ENCODE measurements at regions of chr17 and their contacts with region 1.

Region 1: GRCh38 chr17:56592487-56593085 is 913 bp upstream of the NOG start:
- DNase-seq: peak; percentile 52 to 88 (median 82)
- ATAC-seq: peak; percentile 96
- H3K4me3 ChIP-seq: no peak overlapping the region
- H3K27ac ChIP-seq: no peak overlapping the region
- H3K4me1 ChIP-seq: peaks cover 0 to 22% of the 10 kb centered on the region in 2 experiments; a peak in 2 of 5 replicates
- H3K27me3 ChIP-seq: peaks cover 17 to 28% of the 10 kb centered on the region in 2 experiments
- CTCF ChIP-seq: peak; percentile 67 to 88 (median 76)
- EP300 ChIP-seq: no peak
- POLR2A ChIP-seq: no peak
- RAD21 ChIP-seq: peak; percentile 84 to 91

Region 2: DNA sequence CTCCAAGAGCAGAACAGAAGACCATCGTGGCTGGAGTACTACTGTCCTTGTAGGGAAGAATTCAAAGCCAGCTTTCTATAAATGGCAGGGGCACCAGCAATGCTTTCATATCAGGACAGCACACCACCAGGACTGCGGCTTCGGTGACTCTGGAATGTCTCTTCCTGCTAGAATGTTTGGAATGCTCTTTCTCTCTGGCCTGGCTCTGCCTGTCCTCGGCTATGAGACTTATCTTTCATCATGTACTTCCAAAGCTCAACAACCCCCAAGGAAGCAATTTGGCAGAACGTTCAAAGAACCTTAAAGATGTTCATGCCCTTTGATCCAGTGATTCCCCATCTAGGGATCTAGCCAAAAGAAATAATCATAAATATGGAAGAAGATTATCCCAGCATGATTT is 51.8 kb before region 1 on chr17:
- CTCF ChIA-PET with region 1: no interaction called
- POLR2A ChIA-PET with region 1: no interaction called
- in situ Hi-C with region 1: no loop called
- intact Hi-C with region 1: no loop called
- DNase-seq: no peak
- ATAC-seq: no peak
- H3K4me3 ChIP-seq: no peak overlapping the region
- H3K27ac ChIP-seq: no peak overlapping the region
- H3K4me1 ChIP-seq: no peaks in the 10 kb centered on the region
- H3K27me3 ChIP-seq: no peaks in the 10 kb centered on the region
- CTCF ChIP-seq: no peak
- EP300 ChIP-seq: no peak
- POLR2A ChIP-seq: no peak
- RAD21 ChIP-seq: no peak

Region 3: DNA sequence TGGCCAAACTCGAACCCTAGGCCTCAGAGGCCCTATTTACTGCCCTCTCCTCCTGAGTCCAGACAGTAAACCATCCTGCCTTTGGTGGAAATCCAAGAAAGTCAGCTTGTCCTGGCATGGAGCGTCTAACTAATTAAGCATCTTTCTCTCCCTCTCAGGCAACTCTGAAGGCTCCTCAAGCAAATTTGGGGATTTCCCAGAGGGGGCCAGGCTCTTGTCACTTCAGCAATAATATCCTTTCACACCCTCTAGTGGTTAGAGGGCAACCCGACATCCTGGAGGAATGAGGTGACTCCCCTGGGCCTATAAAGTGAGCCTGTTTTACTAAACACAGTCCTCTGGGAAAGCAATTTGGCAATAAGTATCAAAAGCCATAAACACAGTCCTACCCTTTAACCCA is 61.3 kb after region 1 on chr17:
- CTCF ChIA-PET with region 1: no interaction called
- POLR2A ChIA-PET with region 1: no interaction called
- in situ Hi-C with region 1: no loop called
- intact Hi-C with region 1: no loop called
- DNase-seq: peak; percentile 15 to 39 (median 25)
- ATAC-seq: peak; percentile 78
- H3K4me3 ChIP-seq: no peak overlapping the region
- H3K27ac ChIP-seq: no peak overlapping the region
- H3K4me1 ChIP-seq: no peaks in the 10 kb centered on the region
- H3K27me3 ChIP-seq: no peaks in the 10 kb centered on the region
- CTCF ChIP-seq: peak; percentile 34 to 45 (median 42); a peak in 3 of 6 replicates
- EP300 ChIP-seq: no peak
- POLR2A ChIP-seq: no peak
- RAD21 ChIP-seq: no peak

Region 4: DNA sequence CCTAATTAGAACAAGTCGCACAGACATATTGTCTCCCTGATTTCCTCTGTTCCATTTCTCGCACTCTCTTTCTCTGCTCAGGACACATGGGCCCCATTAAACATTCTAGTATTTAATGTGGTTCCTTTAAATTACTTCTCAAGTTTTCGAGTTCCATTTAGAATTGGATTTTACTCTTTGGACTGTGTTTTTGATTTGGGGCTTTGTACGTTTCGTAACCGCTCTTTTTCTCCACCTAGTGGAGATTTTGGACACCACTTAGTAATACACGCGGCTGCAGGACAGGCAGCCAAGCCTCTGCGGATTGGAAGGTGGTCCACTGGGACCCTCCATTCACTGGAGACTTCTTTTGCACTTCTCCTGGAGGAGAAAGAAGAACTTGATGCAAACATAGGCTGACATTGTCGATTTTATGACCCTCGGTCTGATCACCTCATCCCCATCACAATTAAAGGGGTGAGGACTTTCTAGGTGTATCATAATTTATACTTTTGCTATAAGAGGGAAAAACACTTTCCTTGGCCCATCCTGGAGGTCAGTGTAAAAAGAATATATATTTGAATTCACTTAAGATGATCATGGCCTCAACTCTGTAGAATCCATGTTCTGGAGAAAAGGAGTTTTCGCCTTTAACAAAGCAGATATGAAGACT is 86.7 kb after region 1 on chr17:
- CTCF ChIA-PET with region 1: no interaction called
- POLR2A ChIA-PET with region 1: no interaction called
- in situ Hi-C with region 1: no loop called
- intact Hi-C with region 1: loop called (anchors 10 kb)
- DNase-seq: peak; percentile 20 to 44 (median 34)
- ATAC-seq: peak; percentile 77
- H3K4me3 ChIP-seq: no peak overlapping the region
- H3K27ac ChIP-seq: no peak overlapping the region
- H3K4me1 ChIP-seq: no peaks in the 10 kb centered on the region
- H3K27me3 ChIP-seq: peaks cover 6 to 13% of the 10 kb centered on the region in 2 experiments; a peak in 2 of 5 replicates
- CTCF ChIP-seq: peak; percentile 40 to 66 (median 51); a peak in 5 of 6 replicates
- EP300 ChIP-seq: no peak
- POLR2A ChIP-seq: no peak
- RAD21 ChIP-seq: peak in 1 of 2 experiments; percentile 45; a peak in 2 of 4 replicates

Region 5: DNA sequence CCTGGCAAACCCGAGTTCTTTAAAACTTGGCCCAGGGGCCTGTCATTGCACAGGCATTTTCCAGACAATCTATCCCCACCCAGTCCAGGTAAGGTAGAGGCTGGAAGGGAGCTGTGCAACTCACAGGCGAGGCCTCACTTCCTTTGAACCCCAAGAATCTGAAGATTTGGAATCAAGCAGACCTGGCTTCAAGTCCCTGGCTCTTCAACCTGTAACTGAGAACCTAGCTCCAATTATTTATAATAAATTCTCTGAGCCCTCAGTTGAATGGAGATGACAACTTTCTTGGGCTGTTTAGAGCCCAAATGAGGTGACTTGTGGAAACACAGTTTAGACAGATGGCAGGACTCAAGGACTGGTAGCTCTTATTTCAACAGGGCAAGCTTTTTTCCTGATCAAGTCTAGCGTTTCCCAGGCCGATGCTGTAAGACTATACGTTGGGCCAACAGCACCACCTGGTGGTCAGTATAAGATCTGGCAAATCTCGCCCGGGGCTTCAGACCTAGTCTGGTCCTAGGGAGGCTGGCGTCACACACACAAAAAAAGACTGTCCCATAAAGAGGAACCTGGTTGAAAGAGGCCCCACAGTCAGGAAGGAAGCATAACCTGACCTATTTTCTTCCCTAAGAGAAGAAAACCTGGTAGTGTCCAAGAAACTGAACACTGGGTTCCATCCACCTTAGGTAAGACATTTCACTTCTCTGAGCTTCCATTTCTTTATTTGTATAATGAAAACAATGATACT is 123.2 kb after region 1 on chr17:
- CTCF ChIA-PET with region 1: interaction called, 13 read pairs
- POLR2A ChIA-PET with region 1: interaction called, 8 read pairs
- in situ Hi-C with region 1: loop called (anchors 5 kb)
- intact Hi-C with region 1: loop called (anchors 1 kb)
- DNase-seq: peak; percentile 74 to 83 (median 80)
- ATAC-seq: peak; percentile 99
- H3K4me3 ChIP-seq: no peak overlapping the region
- H3K27ac ChIP-seq: no peak overlapping the region
- H3K4me1 ChIP-seq: no peaks in the 10 kb centered on the region
- H3K27me3 ChIP-seq: peaks cover 2 to 29% of the 10 kb centered on the region in 2 experiments
- CTCF ChIP-seq: peak; percentile 78 to 86 (median 80)
- EP300 ChIP-seq: no peak
- POLR2A ChIP-seq: no peak
- RAD21 ChIP-seq: peak; percentile 75 to 86